Endothelial cell of umbilical vein (primary cell): ENCODE measurements at regions of chr7 and their contacts with region 1.

Region 1: GRCh38 chr7:18019573-18019972 is 8.1 kb downstream of the PRPS1L1 start:
- DNase-seq: peak; percentile 98
- H3K4me3 ChIP-seq: peak overlapping the region in 1 of 3 experiments; percentile 11
- H3K27ac ChIP-seq: peak overlapping the region; percentile 95
- H3K4me1 ChIP-seq: peaks cover 24% of the 10 kb centered on the region
- H3K27me3 ChIP-seq: no peaks in the 10 kb centered on the region
- CTCF ChIP-seq: no peak
- POLR2A ChIP-seq: peak; percentile 49

Region 2: DNA sequence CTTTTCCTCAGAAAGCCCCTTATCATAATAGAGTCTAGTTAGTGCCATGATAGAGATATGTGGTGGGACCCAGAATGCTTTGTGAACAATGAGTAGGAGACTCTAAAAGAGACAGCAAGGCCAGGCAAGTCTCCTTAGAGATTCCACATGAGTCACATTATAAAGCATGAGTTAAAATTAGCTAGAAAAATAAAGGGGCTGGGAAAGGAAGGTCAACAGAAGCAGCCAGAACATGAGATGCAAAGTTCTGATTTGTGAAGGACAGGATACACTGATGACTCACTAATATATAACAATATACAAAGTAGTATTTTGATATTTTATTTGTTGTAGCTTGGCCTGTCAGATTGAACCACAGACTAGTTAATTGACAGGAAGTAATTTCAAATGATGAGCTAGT is 54.0 kb before region 1 on chr7:
- CTCF ChIA-PET with region 1: no interaction called
- POLR2A ChIA-PET with region 1: no interaction called
- dilution Hi-C with region 1: no loop called
- intact Hi-C with region 1: loop called (anchors 1 kb)
- DNase-seq: peak; percentile 87
- H3K4me3 ChIP-seq: no peak overlapping the region
- H3K27ac ChIP-seq: peak overlapping the region; percentile 40
- H3K4me1 ChIP-seq: peaks cover 7% of the 10 kb centered on the region
- H3K27me3 ChIP-seq: no peaks in the 10 kb centered on the region
- CTCF ChIP-seq: no peak
- POLR2A ChIP-seq: no peak